Upper lobe of right lung (tissue), 1 donor: ENCODE measurements at regions of chr4 and their contacts with region 1.

Region 1: GRCh38 chr4:168710353-168710946 is 213.6 kb downstream of the PALLD start:
- DNase-seq: no peak
- ATAC-seq: peak; percentile 73
- H3K4me3 ChIP-seq: no peak overlapping the region
- H3K27ac ChIP-seq: no peak overlapping the region
- H3K4me1 ChIP-seq: peaks cover 8% of the 10 kb centered on the region
- H3K27me3 ChIP-seq: no peaks in the 10 kb centered on the region
- CTCF ChIP-seq: peak; percentile 60

Region 2: DNA sequence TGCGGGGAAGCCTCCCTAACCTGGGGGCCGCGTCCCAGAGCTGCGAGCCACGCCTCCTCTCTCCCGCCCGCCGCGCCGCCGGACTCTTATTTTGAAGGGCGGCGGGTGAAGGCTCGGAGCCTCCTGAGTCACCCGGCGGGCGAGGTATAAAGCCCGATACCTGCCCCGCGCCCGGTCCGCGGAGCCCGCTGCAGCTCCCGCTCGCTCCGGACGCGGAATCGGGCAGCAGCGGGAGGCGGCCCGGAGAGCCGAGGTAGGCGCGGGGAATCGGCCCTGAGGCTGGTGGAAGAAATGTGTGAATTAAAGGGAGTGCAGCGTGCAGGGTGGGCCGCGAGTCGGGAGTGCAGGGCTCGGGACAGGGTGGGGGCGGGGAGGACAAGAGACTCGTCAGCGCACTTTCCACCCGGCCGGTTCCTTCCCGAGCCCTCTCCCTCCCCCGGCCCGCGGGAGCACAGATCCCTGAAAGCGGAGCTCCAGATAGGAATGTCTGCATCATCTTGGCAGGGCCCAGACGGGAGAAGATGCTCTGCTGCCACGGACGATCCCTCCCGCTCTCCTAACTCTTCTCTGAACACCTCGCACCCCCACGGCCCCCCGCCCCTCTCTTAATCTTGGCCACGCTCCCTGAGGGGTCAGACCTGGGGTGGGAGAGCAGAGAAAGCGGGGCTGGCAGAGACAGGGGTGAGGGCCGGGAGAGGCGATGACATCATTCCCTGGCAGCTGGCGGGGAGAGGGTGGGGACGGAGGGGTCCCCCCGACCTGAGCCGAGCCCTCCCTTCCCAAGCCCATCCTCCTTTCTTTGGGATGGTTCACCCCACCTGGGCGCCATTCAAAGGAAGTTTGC is 121.7 kb after region 1 on chr4:
- intact Hi-C with region 1: loop called (anchors 10 kb)
- DNase-seq: peak; percentile 85
- ATAC-seq: peak; percentile 95
- H3K4me3 ChIP-seq: peak overlapping the region; percentile 67
- H3K27ac ChIP-seq: peak overlapping the region; percentile 82
- H3K4me1 ChIP-seq: no peaks in the 10 kb centered on the region
- H3K27me3 ChIP-seq: no peaks in the 10 kb centered on the region
- CTCF ChIP-seq: no peak

Region 3: DNA sequence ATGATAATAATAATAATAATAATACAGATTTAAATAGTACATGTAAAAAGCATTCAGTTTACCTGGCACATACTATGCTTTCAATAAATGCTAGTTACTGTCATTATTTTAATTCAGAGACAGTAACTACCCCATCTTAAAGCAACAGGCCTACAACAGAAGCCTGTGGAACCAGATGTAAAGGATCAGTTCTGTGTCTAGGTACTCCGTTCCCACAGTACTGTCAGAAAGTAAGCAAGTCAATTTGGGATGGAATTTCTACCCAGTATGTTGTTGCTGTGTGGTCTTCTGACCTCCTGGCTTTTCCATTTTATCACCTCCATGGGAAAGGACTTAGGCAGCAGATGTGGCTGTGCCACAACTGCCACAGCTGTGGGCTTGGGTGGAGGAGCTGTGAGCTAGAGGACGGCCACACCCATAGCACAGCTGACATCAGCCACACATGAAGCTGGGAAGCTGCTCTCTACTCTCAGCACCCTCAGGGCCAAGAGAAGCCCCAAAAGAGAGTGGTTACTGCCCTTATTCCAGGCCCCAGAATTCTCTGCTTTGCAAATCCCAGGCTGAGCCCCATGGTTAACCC is 196.8 kb after region 1 on chr4:
- intact Hi-C with region 1: loop called (anchors 10 kb)
- DNase-seq: no peak
- ATAC-seq: peak; percentile 49
- H3K4me3 ChIP-seq: no peak overlapping the region
- H3K27ac ChIP-seq: no peak overlapping the region
- H3K4me1 ChIP-seq: peaks cover 3% of the 10 kb centered on the region
- H3K27me3 ChIP-seq: no peaks in the 10 kb centered on the region
- CTCF ChIP-seq: no peak